ENCODE measurements at regions of chr12 and their contacts with region 1.

Region 1: GRCh38 chr12:13941258-13942249 is 39.8 kb downstream of the GRIN2B start:
- H3K4me3 ChIP-seq: no peak overlapping the region
- H3K27ac ChIP-seq: no peak overlapping the region
- H3K4me1 ChIP-seq: no peaks in the 10 kb centered on the region
- CTCF ChIP-seq: peak; percentile 38; the same call in 1 of the 2 replicates

Region 2: GRCh38 chr12:13661005-13661887 is 280.3 kb before region 1 on chr12:
- CTCF ChIA-PET with region 1: no interaction called
- POLR2A ChIA-PET with region 1: no interaction called
- H3K4me3 ChIP-seq: no peak overlapping the region
- H3K27ac ChIP-seq: no peak overlapping the region
- H3K4me1 ChIP-seq: no peaks in the 10 kb centered on the region
- CTCF ChIP-seq: no peak

Region 3: DNA sequence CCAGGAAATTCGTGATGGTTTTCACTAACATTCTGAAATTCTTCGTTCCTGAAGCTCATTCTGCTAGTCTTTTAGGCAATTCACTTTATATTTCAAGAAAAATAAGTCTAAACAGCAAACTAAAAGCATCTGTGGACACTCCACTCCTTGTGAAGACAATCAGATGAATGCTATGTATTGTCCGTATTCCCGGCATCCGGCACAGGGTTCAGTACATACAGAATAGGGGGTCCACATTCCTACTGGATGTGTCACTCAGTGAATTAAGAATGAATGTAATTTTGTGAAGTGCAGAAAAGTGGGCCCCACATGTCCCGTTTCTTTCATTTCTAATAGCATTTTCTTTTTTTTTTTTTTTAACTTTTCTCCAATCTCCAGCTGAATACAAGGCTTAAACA is 201.4 kb before region 1 on chr12:
- CTCF ChIA-PET with region 1: interaction called, 29 read pairs
- POLR2A ChIA-PET with region 1: no interaction called
- H3K4me3 ChIP-seq: no peak overlapping the region
- H3K27ac ChIP-seq: no peak overlapping the region
- H3K4me1 ChIP-seq: peaks cover 2% of the 10 kb centered on the region; the same call in 1 of the 2 replicates
- CTCF ChIP-seq: no peak

Region 4: DNA sequence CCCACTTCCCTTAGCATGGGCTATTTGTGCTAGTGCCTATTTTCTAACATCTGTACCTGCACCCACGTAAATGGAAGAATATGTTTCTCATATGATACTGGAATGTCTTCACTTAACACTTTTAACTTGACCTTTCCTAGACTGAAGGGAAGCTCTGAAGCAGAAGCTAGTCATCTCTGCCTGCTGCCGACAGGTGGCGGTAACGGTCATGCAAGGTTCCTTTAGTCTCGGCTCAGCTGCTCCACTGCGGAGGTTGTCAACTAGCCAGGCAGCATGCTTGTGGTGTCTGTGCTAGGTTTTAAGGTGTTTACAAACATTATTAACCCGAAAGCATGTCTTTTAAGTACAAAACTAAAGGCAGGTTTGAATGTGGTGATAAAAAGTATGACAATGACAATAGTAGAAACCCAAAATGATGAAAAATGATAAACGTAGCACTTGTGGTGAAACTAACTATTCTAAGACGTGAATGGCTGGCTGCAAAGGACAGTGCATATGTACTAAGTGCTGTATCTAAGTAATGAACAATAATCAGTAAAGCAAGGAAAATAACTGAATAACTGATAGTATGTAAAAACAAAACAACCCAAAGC is 77.4 kb before region 1 on chr12:
- CTCF ChIA-PET with region 1: interaction called, 10 read pairs
- POLR2A ChIA-PET with region 1: no interaction called
- H3K4me3 ChIP-seq: no peak overlapping the region
- H3K27ac ChIP-seq: no peak overlapping the region
- H3K4me1 ChIP-seq: no peaks in the 10 kb centered on the region
- CTCF ChIP-seq: peak; percentile 64

Region 5: GRCh38 chr12:13915096-13915495 is 26.5 kb before region 1 on chr12:
- CTCF ChIA-PET with region 1: no interaction called
- POLR2A ChIA-PET with region 1: no interaction called
- H3K4me3 ChIP-seq: no peak overlapping the region
- H3K27ac ChIP-seq: no peak overlapping the region
- H3K4me1 ChIP-seq: no peaks in the 10 kb centered on the region
- CTCF ChIP-seq: no peak

Region 6: DNA sequence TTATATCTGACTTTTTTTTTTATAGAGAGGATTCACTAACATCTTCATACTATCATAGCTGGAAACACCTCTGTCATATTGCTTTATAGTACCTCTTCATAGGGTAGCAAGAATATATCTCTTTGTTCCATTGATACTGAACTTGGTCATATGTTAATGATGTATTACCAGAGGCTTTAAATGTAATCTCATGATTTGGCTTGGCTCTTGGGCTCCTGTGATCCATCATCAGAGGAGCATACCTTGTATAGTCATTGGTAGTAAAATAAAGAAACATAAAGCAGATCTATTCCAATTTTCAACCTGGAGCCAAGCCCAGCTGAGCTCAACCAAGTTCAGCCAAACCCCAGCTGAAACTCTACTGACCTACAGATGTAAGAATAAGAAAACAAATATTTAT is 83.0 kb after region 1 on chr12:
- CTCF ChIA-PET with region 1: no interaction called
- POLR2A ChIA-PET with region 1: no interaction called
- H3K4me3 ChIP-seq: no peak overlapping the region
- H3K27ac ChIP-seq: no peak overlapping the region
- H3K4me1 ChIP-seq: no peaks in the 10 kb centered on the region
- CTCF ChIP-seq: no peak

Measured in HEK293 (cell line).